HepG2 (cell line): ENCODE measurements at regions of chr3 and their contacts with region 1.

Region 1: GRCh38 chr3:9946112-9947024 is 5.8 kb downstream of the PRRT3 start:
- DNase-seq: peak; percentile 74
- ATAC-seq: peak; percentile 87
- H3K4me3 ChIP-seq: peak overlapping the region; percentile 51 to 85 (median 77)
- H3K27ac ChIP-seq: peak overlapping the region; percentile 70
- H3K4me1 ChIP-seq: peaks cover 27% of the 10 kb centered on the region
- H3K27me3 ChIP-seq: no peaks in the 10 kb centered on the region
- CTCF ChIP-seq: peak; percentile 88
- EP300 ChIP-seq: peak; percentile 23 to 31; a peak in 2 of 4 replicates
- POLR2A ChIP-seq: peak in 1 of 2 experiments; percentile 45; a peak in 1 of 4 replicates
- RAD21 ChIP-seq: peak; percentile 96

Region 2: DNA sequence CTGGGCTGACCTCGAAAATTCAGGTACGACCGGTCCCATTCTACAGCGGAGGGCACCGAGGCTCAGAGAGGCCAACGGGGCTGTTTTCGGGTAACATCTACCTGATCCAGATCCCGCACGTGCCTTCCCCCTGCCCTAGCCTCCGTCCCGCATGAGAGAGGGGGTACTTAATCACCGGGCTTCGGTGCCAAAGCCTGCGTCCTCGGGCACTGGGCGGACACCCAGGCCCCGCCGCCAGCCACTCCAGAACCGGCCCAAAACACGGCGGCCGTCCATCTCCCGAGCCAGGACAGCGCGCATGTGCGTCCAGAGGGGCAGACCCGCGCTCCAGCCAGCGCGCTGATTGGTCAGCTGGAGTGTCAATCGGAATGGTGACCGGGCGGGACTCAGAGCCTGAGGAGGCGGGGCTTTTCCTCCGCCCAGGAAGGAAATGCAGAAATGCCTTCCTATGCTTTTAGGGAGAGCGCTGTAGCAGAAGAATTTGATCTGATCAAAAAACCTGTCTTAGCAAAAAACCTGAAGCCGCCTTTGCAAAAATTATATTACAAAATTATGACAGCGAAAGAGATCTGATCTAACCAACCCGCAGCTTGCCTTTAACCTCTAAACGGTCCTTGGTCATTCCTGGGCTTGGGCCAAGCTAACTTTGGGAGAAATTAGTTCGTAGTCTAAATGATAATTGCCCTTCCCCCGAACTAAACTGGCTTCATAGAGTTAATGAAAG is 102.5 kb before region 1 on chr3 and contains the start of gene RPUSD3:
- CTCF ChIA-PET with region 1: no interaction called
- POLR2A ChIA-PET with region 1: interaction called, 17 read pairs
- in situ Hi-C with region 1: no loop called
- intact Hi-C with region 1: no loop called
- DNase-seq: peak; percentile 82
- ATAC-seq: peak; percentile 98
- H3K4me3 ChIP-seq: peak within 1 kb of the TSS; percentile 74 to 94 (median 87)
- H3K27ac ChIP-seq: peak within 1 kb of the TSS; percentile 56
- H3K4me1 ChIP-seq: peaks cover 22% of the 10 kb centered on the region
- H3K27me3 ChIP-seq: no peaks in the 10 kb centered on the region; a peak in 1 of 5 replicates
- CTCF ChIP-seq: 0 out of 2 replicates have a peak, but pooled peaks have one; percentile 3
- EP300 ChIP-seq: no peak
- POLR2A ChIP-seq: peak in 1 of 2 experiments; percentile 86; a peak in 3 of 4 replicates
- RAD21 ChIP-seq: no peak
- total RNA-seq, gene RPUSD3: 30.3 and 32.1 TPM in 2 replicates

Region 3: GRCh38 chr3:9890249-9891071 is 55.9 kb before region 1 on chr3 and contains the start of gene JAGN1:
- CTCF ChIA-PET with region 1: no interaction called
- POLR2A ChIA-PET with region 1: interaction called, 12 read pairs
- in situ Hi-C with region 1: no loop called
- intact Hi-C with region 1: no loop called
- DNase-seq: peak; percentile 77
- ATAC-seq: peak; percentile 85
- H3K4me3 ChIP-seq: peak within 1 kb of the TSS; percentile 85 to 99 (median 98)
- H3K27ac ChIP-seq: peak within 1 kb of the TSS; percentile 92
- H3K4me1 ChIP-seq: peaks cover 50% of the 10 kb centered on the region
- H3K27me3 ChIP-seq: no peaks in the 10 kb centered on the region; a peak in 1 of 5 replicates
- CTCF ChIP-seq: peak; percentile 57
- EP300 ChIP-seq: peak in 1 of 2 experiments; percentile 46; a peak in 2 of 4 replicates
- POLR2A ChIP-seq: peak; percentile 89 to 97
- RAD21 ChIP-seq: peak; percentile 71
- total RNA-seq, gene JAGN1: 40.9 and 50.9 TPM in 2 replicates

Region 4: GRCh38 chr3:9915254-9916141 is 30.9 kb before region 1 on chr3:
- CTCF ChIA-PET with region 1: no interaction called
- POLR2A ChIA-PET with region 1: interaction called, 31 read pairs
- in situ Hi-C with region 1: no loop called
- intact Hi-C with region 1: no loop called
- DNase-seq: peak; percentile 36
- ATAC-seq: peak; percentile 52
- H3K4me3 ChIP-seq: peak overlapping the region; percentile 55 to 86 (median 83); a peak in 5 of 6 replicates
- H3K27ac ChIP-seq: peak overlapping the region; percentile 90
- H3K4me1 ChIP-seq: peaks cover 38% of the 10 kb centered on the region
- H3K27me3 ChIP-seq: no peaks in the 10 kb centered on the region
- CTCF ChIP-seq: peak; percentile 53; the same call in 1 of the 2 replicates
- EP300 ChIP-seq: no peak
- POLR2A ChIP-seq: no peak; a peak in 1 of 4 replicates
- RAD21 ChIP-seq: peak; percentile 89

Region 5: DNA sequence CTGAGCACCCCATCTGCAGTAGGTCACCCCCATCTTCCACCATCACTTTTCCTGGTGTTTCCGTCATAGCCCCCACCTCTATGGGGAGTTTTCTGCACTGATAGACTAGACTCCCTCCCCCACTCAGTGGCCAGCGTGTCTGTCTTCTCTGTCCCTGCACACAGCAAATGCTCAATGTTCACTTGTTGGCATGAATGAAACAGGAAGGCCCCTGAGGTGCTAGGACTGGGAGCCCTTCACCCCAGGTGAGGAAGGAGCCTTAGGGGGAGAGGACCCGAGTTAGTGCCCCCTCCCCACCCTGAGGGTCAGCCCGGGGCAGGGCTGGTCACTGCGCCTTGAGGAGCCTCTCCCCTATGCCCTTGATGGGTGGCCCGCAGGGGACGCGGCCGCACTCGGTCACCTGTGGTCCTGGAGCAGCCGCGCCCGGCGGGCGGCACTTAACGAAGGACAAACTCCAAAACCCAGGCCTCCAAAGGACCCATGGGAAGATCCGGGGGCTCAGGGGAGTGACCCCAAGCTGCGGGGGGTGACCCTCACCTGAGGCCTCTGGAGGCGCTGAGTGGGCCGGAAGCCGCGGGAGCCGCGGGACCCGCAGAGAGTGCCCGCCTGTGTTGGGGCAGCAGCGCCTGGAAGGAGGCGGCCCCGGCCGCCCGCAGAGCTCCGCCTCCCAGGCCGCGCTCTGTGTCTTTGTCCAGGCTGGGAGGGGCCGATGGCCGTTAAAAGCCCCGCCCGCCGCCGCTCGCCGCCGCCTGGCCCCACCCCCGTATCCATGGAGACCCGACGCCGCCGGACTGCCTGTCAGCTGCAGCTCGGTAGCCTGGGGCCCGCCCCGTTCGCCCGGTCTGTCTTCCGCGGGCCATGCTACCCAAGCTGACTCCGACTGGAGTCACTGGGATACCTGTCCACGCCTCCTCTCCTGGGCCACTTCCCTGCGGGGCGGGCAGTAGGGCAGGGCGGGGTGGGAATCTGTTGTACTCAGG is 64.4 kb after region 1 on chr3:
- CTCF ChIA-PET with region 1: no interaction called
- POLR2A ChIA-PET with region 1: interaction called, 9 read pairs
- in situ Hi-C with region 1: no loop called
- intact Hi-C with region 1: loop called (anchors 10 kb)
- DNase-seq: peak; percentile 78
- ATAC-seq: peak; percentile 83
- H3K4me3 ChIP-seq: peak overlapping the region; percentile 60 to 84 (median 76)
- H3K27ac ChIP-seq: no peak overlapping the region
- H3K4me1 ChIP-seq: peaks cover 49% of the 10 kb centered on the region
- H3K27me3 ChIP-seq: no peaks in the 10 kb centered on the region; a peak in 1 of 5 replicates
- CTCF ChIP-seq: no peak
- EP300 ChIP-seq: no peak
- POLR2A ChIP-seq: peak in 1 of 2 experiments; percentile 61; a peak in 1 of 4 replicates
- RAD21 ChIP-seq: peak; percentile 40; the same call in 1 of the 2 replicates

Region 6: DNA sequence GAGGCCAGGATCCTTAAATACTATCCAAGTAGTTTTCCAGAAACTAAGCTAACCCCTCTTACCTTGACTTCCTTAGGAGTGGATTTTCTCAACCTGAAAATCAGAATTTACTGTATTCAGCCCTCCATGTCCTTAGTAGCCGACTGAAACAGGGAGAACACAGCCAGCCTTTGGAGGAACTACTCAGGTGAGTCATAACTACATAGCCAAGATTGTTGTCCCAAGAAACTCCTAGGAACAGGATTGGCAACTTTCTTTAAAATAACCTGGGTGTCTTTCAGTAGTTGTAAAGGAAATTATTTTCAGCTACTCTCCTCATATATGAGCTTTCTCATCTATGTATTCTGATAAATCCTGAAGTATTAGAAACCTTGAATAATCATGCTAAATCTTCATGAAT is 139.4 kb after region 1 on chr3:
- CTCF ChIA-PET with region 1: no interaction called
- POLR2A ChIA-PET with region 1: no interaction called
- in situ Hi-C with region 1: no loop called
- intact Hi-C with region 1: no loop called
- DNase-seq: no peak
- ATAC-seq: no peak
- H3K4me3 ChIP-seq: no peak overlapping the region
- H3K27ac ChIP-seq: no peak overlapping the region
- H3K4me1 ChIP-seq: no peaks in the 10 kb centered on the region
- H3K27me3 ChIP-seq: no peaks in the 10 kb centered on the region
- CTCF ChIP-seq: no peak
- EP300 ChIP-seq: no peak
- POLR2A ChIP-seq: no peak
- RAD21 ChIP-seq: no peak